ENCODE measurements at regions of chr2 and their contacts with region 1.

Region 1: DNA sequence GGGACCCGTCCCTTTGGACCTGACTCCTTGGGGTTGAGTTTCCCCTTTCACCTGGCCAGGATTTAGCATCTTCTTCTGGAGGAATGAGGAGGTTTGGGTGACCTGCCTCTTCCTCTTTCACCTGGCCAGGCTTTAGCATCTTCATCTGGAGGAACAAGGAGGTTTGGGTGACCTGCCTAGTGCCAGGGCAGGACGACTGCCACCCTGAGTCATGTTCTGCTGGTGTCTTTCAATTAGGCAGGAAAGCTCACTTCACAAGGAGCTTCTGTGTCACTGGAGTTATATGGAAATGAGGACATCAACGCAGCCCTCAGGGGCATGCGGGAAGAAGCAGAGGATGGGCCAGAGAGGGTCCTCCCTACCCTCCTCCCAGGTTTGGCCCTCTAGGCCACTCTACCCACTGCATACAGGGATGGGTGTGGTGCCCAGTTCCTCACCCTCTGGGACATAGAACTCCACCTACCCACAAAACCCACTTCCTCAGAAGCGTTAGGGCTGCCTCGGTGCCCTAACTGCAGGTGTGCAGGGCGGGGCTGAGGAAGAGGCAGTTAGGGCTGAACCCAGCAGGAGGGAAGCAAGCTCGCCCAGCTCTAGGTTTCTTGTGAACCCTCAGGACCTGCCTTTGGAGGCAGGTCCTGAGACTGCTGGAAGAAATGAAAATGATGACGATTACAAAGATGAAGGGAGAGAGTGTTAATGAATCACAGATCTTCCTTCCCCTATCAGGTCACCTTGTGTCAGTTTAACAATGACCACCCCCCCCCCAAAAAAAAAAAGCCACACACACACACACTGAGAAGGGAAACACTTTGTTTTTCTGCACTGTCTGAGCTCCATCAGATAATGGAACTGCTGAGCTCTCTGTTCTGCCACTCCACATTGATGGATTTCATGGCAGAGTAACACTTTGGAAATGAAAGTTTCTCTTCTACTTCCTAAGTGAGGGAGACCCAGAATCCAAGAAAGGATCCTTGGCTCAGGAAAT is 71.0 kb downstream of the ARL4C start:
- DNase-seq: peak; percentile 62
- ATAC-seq: peak; percentile 92
- H3K4me3 Mint-ChIP-seq: peak overlapping the region; percentile 68
- H3K27ac Mint-ChIP-seq: peak overlapping the region; percentile 82
- H3K4me1 Mint-ChIP-seq: peaks cover 83% of the 10 kb centered on the region
- H3K27me3 Mint-ChIP-seq: no peaks in the 10 kb centered on the region
- CTCF ChIP-seq: no peak

Region 2: GRCh38 chr2:234135720-234136221 is 290.1 kb before region 1 on chr2:
- CTCF ChIA-PET with region 1: interaction called, 5 read pairs
- POLR2A ChIA-PET with region 1: no interaction called
- intact Hi-C with region 1: loop called (anchors 5 kb)
- DNase-seq: peak; percentile 32
- ATAC-seq: peak; percentile 75
- H3K4me3 Mint-ChIP-seq: no peak overlapping the region
- H3K27ac Mint-ChIP-seq: peak overlapping the region; percentile 20
- H3K4me1 Mint-ChIP-seq: peaks cover 8% of the 10 kb centered on the region
- H3K27me3 Mint-ChIP-seq: peaks cover 30% of the 10 kb centered on the region
- CTCF ChIP-seq: no peak

Region 3: DNA sequence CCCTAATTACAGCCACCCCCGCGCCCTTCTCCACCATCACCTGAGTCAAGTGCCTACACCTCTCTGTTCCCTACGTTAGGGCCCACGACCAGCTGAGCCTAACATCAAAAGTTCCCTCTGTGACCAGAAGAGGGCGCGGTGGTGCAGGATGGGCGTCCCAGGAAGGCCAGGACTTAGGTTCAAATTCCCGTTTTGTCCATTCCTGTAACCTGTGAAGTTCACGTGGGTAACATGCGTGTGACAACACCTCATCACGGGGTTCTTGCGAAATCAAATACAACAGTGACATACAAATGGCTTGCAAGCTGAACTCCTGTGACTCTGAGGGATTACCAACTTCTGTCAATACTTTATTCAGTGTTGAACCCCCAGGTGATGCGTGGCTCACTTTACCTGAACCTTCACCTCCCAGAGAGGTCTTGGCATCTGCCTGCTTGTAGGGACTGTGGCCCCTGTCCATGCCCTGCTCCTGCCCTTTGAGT is 136.9 kb before region 1 on chr2:
- CTCF ChIA-PET with region 1: interaction called, 5 read pairs
- POLR2A ChIA-PET with region 1: interaction called, 10 read pairs
- intact Hi-C with region 1: loop called (anchors 5 kb)
- DNase-seq: peak; percentile 50
- ATAC-seq: no peak
- H3K4me3 Mint-ChIP-seq: no peak overlapping the region
- H3K27ac Mint-ChIP-seq: no peak overlapping the region
- H3K4me1 Mint-ChIP-seq: peaks cover 54% of the 10 kb centered on the region
- H3K27me3 Mint-ChIP-seq: peaks cover 17% of the 10 kb centered on the region
- CTCF ChIP-seq: no peak

Region 4: DNA sequence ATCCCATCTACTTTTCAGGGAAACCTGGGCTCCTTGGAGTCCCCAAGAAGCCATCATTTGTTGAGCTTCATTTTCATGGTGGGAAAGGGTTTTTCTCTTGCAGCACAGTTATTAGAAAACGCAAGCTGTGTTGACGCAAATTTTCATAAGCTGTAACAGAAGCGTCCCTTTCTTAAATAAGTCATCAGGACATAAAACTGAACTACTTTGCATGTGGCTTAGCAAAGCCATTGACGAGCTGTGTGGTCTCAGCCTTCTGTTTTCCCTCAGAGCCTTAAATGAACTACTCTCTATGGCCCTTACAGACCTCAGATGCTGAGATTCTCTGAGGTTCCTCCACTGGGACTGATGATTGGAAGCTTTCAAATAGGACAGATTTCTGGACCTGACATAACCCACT is 14.1 kb before region 1 on chr2:
- CTCF ChIA-PET with region 1: no interaction called
- POLR2A ChIA-PET with region 1: interaction called, 20 read pairs
- intact Hi-C with region 1: loop called (anchors 1 kb)
- DNase-seq: no peak
- ATAC-seq: peak; percentile 85
- H3K4me3 Mint-ChIP-seq: peak overlapping the region; percentile 44
- H3K27ac Mint-ChIP-seq: no peak overlapping the region
- H3K4me1 Mint-ChIP-seq: peaks cover 58% of the 10 kb centered on the region
- H3K27me3 Mint-ChIP-seq: no peaks in the 10 kb centered on the region
- CTCF ChIP-seq: no peak

Region 5: GRCh38 chr2:234446404-234447076 is 20.6 kb after region 1 on chr2:
- CTCF ChIA-PET with region 1: interaction called, 3 read pairs
- POLR2A ChIA-PET with region 1: interaction called, 64 read pairs
- intact Hi-C with region 1: loop called (anchors 1 kb)
- DNase-seq: peak; percentile 68
- ATAC-seq: peak; percentile 93
- H3K4me3 Mint-ChIP-seq: peak overlapping the region; percentile 66
- H3K27ac Mint-ChIP-seq: peak overlapping the region; percentile 96
- H3K4me1 Mint-ChIP-seq: peaks cover 83% of the 10 kb centered on the region
- H3K27me3 Mint-ChIP-seq: no peaks in the 10 kb centered on the region
- CTCF ChIP-seq: no peak